ENCODE measurements at regions of chr7 and their contacts with region 1.

Region 1: GRCh38 chr7:120987683-120988590 is 574 bp upstream of the CPED1 start:
- DNase-seq: peak; percentile 95 to 96
- ATAC-seq: peak; percentile 95
- H3K4me3 ChIP-seq: peak overlapping the region; percentile 93 to 94
- H3K27ac ChIP-seq: peak overlapping the region; percentile 36 to 89
- H3K4me1 ChIP-seq: peaks cover 0 to 2% of the 10 kb centered on the region in 2 donors
- H3K27me3 ChIP-seq: no peaks in the 10 kb centered on the region

Region 2: GRCh38 chr7:121023683-121024511 is 36.0 kb after region 1 on chr7:
- intact Hi-C with region 1: no loop called
- DNase-seq: no peak
- ATAC-seq: no peak
- H3K4me3 ChIP-seq: no peak overlapping the region
- H3K27ac ChIP-seq: peak overlapping the region; percentile 36 to 84
- H3K4me1 ChIP-seq: peaks cover 0 to 16% of the 10 kb centered on the region in 2 donors
- H3K27me3 ChIP-seq: no peaks in the 10 kb centered on the region

Region 3: GRCh38 chr7:121041516-121042148 is 53.7 kb after region 1 on chr7:
- intact Hi-C with region 1: loop called in 1 of 2 experiments (anchors 5 kb)
- DNase-seq: no peak
- ATAC-seq: no peak
- H3K4me3 ChIP-seq: no peak overlapping the region
- H3K27ac ChIP-seq: no peak overlapping the region
- H3K4me1 ChIP-seq: peaks cover 2 to 5% of the 10 kb centered on the region in 2 donors
- H3K27me3 ChIP-seq: no peaks in the 10 kb centered on the region

Region 4: GRCh38 chr7:121081327-121081936 is 93.5 kb after region 1 on chr7:
- intact Hi-C with region 1: loop called (anchors 2 kb)
- DNase-seq: no peak
- ATAC-seq: peak; percentile 85
- H3K4me3 ChIP-seq: no peak overlapping the region
- H3K27ac ChIP-seq: no peak overlapping the region
- H3K4me1 ChIP-seq: peaks cover 4 to 14% of the 10 kb centered on the region in 2 donors
- H3K27me3 ChIP-seq: no peaks in the 10 kb centered on the region

Region 5: GRCh38 chr7:121107923-121108498 is 120.1 kb after region 1 on chr7:
- intact Hi-C with region 1: loop called (anchors 2 kb)
- DNase-seq: no peak
- ATAC-seq: peak; percentile 81
- H3K4me3 ChIP-seq: no peak overlapping the region
- H3K27ac ChIP-seq: no peak overlapping the region
- H3K4me1 ChIP-seq: peaks cover 0 to 2% of the 10 kb centered on the region in 2 donors
- H3K27me3 ChIP-seq: no peaks in the 10 kb centered on the region

Region 6: DNA sequence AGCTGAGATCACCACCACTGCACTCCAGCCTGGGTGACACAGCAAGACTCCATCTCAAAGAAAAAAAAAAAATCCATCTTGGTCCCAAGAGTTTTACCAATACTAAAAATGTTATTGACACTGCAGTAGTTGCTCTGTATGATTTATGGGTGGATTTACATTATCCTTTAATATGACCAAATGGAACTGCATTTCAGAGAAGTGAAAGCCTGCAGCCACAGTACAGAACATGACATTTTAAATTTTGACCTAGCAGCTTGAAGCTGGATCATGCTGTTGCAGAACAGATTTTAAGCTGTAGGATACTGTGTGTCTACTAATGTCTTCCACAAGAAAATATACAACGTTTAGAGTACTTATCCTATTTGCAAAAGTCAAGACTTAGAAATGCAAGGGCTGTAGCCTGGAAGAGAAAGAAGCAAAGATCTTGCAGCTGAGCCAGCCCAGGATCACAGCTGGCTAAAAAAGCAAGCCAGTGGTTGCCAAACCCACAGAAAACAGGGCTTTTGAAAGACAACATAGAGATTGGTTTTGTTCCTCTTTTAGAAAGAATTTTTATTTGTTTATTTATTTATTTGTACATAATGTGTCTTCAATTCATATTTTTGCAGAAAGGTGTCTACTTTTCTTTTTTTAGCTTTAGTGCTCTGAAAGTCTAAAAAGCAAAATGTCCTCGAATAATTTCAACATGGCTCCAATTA is 285.7 kb after region 1 on chr7:
- intact Hi-C with region 1: no loop called
- DNase-seq: no peak
- ATAC-seq: no peak
- H3K4me3 ChIP-seq: no peak overlapping the region
- H3K27ac ChIP-seq: no peak overlapping the region
- H3K4me1 ChIP-seq: peaks cover 0 to 2% of the 10 kb centered on the region in 2 donors
- H3K27me3 ChIP-seq: no peaks in the 10 kb centered on the region